ENCODE measurements at regions of chr11 and their contacts with region 1.

Region 1: DNA sequence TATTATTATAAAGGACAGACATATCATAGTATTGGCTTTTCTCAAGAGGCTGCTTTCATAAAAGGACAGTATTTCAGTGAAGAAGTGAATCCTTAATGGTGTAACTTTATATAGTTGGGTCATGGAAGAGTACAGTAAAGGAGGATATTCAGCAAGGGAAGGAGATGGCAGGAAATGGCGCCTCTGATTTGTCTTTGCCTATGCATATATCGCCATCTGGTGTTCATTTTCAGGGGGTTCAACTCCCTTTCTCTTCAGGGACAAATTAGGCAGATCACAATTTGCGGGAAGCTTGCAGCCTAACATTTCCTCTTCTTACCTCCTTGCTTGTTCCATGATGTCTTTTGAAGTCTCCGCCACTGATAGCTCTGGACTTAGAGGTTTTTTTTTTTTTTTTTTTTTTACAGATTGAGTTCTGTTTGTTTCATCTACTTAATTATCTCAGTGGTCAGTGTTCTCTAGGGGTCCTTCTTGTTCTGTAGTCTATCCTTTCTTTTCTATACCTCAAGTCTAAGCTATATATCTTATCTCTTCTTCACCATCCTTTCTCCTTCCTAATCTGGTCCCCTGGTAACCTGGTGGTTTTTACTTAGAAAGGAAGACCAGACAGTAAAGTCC is 21.8 kb upstream of the RRM1 start:
- DNase-seq: peak; percentile 81
- H3K4me3 Mint-ChIP-seq: no peak overlapping the region
- H3K27ac Mint-ChIP-seq: no peak overlapping the region
- H3K4me1 Mint-ChIP-seq: peaks cover 10% of the 10 kb centered on the region
- H3K27me3 Mint-ChIP-seq: no peaks in the 10 kb centered on the region
- CTCF ChIP-seq: peak; percentile 73

Region 2: DNA sequence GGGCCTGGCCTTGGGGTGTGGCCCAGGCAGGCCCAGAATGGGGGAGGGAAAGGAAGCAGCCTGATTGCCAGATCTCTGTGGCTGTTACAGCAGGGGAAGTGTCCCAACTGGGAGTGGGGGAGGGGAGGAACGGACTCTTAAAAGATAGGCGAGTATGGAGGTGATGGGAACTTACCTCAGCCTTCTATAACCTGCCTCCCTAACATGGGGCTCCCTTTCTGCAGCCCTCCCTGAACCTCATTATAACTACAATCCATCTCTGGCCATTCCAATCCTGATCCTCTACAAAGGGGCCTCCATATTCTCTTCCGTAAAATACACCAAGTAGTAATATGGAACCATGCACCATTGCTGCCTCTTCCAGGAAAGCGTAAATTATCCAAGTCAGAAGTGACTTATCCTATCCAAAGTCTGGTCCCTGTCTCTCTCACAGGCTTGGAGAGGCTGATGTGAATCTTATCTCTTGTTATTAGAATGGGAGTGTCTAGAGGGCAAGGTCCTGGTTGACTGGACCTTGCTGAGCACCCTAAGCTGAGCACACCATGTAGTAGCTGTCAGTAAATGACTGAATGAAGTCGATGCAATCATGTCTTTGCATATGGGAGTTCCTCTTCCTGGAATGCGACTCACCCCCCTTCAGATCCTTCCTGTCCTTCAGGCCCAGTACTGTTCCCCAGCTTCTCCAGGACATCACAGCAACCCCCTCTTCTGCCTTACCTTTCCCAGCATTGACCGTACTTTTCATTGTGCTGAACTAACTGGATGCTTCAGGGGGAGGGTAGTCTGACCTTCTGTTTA is 237.9 kb before region 1 on chr11:
- CTCF ChIA-PET with region 1: interaction called, 1,105 read pairs
- POLR2A ChIA-PET with region 1: interaction called, 13 read pairs
- intact Hi-C with region 1: no loop called
- DNase-seq: no peak
- H3K4me3 Mint-ChIP-seq: no peak overlapping the region
- H3K27ac Mint-ChIP-seq: peak overlapping the region; percentile 82
- H3K4me1 Mint-ChIP-seq: peaks cover 45% of the 10 kb centered on the region
- H3K27me3 Mint-ChIP-seq: no peaks in the 10 kb centered on the region
- CTCF ChIP-seq: no peak

Region 3: DNA sequence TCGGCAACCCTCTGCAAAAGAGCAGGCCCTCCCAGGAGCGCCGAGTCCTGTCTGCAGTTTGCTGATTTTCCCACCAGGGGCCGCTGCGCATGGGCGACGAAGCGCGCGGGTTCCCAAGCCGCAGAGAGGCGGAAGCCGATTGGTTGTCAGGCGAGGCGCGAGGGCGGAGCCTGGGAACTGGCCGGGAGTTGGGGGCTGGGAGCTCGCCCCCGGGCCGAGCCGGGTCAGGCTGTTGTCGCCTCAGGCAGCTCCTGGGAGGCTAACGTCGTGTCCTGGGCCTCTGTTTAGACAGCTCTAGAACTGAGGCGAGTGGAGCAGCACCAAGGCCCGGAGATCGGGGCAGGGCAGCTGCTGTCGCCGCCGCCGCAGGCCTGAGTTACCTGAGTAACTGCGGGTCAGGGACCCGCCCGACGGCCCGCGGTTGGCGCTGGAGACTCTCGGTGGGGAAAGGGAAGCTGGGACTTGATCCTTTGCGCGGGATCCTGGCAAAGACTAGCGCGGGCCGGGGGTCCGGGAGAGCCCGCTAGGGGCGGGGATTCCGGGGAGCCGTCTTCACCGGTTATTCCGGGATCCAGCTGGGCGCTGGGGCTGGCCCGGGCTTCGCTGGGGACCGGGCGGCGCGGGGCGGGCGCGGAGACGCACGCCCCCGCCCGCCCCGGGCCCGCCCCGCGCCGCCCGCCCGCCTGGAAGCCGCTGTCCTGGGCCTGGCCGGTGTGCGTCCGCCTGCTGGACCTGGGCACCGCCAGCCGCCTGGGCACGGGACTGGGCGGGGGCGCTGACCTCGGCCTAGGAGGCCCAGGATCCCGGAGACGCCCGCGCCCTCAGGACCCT is 217.6 kb before region 1 on chr11 and contains the start of gene STIM1:
- CTCF ChIA-PET with region 1: interaction called, 1,105 read pairs
- POLR2A ChIA-PET with region 1: interaction called, 57 read pairs
- intact Hi-C with region 1: loop called (anchors 1 kb)
- DNase-seq: peak; percentile 94
- H3K4me3 Mint-ChIP-seq: peak within 1 kb of the TSS; percentile 99
- H3K27ac Mint-ChIP-seq: peak within 1 kb of the TSS; percentile 87
- H3K4me1 Mint-ChIP-seq: peaks cover 30% of the 10 kb centered on the region
- H3K27me3 Mint-ChIP-seq: no peaks in the 10 kb centered on the region
- CTCF ChIP-seq: peak; percentile 95
- total RNA-seq, gene STIM1: 41.2 and 56.2 TPM in 2 replicates

Region 4: GRCh38 chr11:3905080-3905953 is 167.5 kb before region 1 on chr11:
- CTCF ChIA-PET with region 1: interaction called, 21 read pairs
- POLR2A ChIA-PET with region 1: no interaction called
- intact Hi-C with region 1: no loop called
- DNase-seq: peak; percentile 89
- H3K4me3 Mint-ChIP-seq: peak overlapping the region; percentile 28
- H3K27ac Mint-ChIP-seq: peak overlapping the region; percentile 67
- H3K4me1 Mint-ChIP-seq: peaks cover 30% of the 10 kb centered on the region
- H3K27me3 Mint-ChIP-seq: no peaks in the 10 kb centered on the region
- CTCF ChIP-seq: no peak

Region 5: GRCh38 chr11:4025248-4025966 is 47.4 kb before region 1 on chr11:
- CTCF ChIA-PET with region 1: interaction called, 20 read pairs
- POLR2A ChIA-PET with region 1: no interaction called
- intact Hi-C with region 1: no loop called
- DNase-seq: peak; percentile 41
- H3K4me3 Mint-ChIP-seq: no peak overlapping the region
- H3K27ac Mint-ChIP-seq: peak overlapping the region; percentile 29
- H3K4me1 Mint-ChIP-seq: peaks cover 21% of the 10 kb centered on the region
- H3K27me3 Mint-ChIP-seq: no peaks in the 10 kb centered on the region
- CTCF ChIP-seq: no peak

Region 6: DNA sequence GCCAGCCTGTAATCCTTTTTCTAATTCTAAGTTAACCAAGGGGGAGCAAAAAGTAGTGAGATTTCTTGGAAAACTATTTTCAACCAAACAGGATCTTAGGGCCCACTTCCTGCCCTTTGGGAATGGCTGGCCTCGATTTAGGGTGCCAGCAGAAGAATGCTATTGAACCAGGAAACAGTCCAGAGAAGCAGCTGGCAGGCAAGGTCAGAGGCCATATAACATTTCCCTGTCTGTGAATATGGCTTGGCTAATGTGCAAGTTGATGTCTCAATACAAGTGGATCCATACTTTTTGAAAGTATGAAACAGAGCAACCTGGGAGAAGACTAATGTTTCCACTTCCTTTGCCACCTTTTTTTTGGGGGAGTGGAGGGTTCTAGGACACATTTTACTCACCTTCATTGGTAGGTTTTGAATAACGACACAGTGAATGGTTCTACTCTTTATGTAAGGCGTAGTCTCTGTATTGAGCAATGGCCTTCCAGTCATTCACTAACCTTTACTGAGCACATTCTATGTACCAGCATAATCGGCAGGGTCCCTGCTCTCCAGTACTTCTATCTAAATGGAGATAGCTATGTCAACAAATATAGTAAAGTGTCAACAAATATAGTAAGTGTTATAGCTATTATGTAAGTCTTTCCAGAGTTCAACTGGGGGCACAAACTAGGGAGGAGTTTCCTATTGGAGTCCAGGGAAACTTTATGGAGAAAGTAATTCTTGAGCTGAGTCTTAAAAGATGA is 12.4 kb before region 1 on chr11:
- CTCF ChIA-PET with region 1: interaction called, 77 read pairs
- POLR2A ChIA-PET with region 1: interaction called, 3 read pairs
- intact Hi-C with region 1: no loop called
- DNase-seq: no peak
- H3K4me3 Mint-ChIP-seq: no peak overlapping the region
- H3K27ac Mint-ChIP-seq: no peak overlapping the region
- H3K4me1 Mint-ChIP-seq: no peaks in the 10 kb centered on the region
- H3K27me3 Mint-ChIP-seq: no peaks in the 10 kb centered on the region
- CTCF ChIP-seq: no peak

Region 7: GRCh38 chr11:4626207-4627099 is 553.7 kb after region 1 on chr11:
- CTCF ChIA-PET with region 1: no interaction called
- POLR2A ChIA-PET with region 1: no interaction called
- intact Hi-C with region 1: no loop called
- DNase-seq: peak; percentile 88
- H3K4me3 Mint-ChIP-seq: no peak overlapping the region
- H3K27ac Mint-ChIP-seq: no peak overlapping the region
- H3K4me1 Mint-ChIP-seq: no peaks in the 10 kb centered on the region
- H3K27me3 Mint-ChIP-seq: peaks cover 45% of the 10 kb centered on the region
- CTCF ChIP-seq: peak; percentile 73

Region 8: DNA sequence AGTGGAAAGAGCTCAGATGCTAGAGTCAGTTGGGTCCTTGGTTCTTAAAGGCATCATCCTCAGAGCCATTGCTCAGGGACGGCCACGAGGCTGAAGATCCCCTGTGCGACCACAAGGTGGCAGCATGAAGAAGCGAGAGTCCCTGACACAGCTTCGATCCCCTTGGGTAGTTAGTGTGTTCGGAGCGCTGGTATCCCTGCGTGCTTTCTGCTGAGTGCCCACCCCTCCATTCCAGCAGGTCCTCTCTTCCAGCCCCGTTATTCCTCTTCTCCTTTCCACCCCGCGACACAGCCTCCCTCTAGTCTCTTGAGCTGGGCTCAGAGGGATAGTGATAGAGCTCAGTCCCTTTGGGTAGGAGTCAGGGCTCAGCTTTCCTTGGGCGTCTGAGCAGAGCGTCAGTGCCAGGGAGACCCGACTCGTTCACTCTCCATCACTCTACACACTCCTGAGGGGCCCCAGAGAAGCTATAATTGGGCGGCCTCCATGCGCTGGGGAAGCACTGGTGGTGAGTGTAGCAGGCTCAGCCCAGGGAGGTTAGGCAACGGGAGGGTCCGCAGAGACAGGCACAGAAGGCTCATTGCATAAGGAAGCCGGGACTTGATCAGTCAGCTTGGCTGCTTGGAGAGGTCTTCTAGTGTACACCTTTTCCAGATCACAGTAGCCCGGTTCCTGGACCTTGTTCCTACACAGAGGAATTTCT is 564.3 kb after region 1 on chr11 and contains the start of gene OR51D1:
- CTCF ChIA-PET with region 1: no interaction called
- POLR2A ChIA-PET with region 1: no interaction called
- intact Hi-C with region 1: no loop called
- DNase-seq: peak; percentile 65
- H3K4me3 Mint-ChIP-seq: no peak within 1 kb of the TSS
- H3K27ac Mint-ChIP-seq: no peak within 1 kb of the TSS
- H3K4me1 Mint-ChIP-seq: no peaks in the 10 kb centered on the region
- H3K27me3 Mint-ChIP-seq: no peaks in the 10 kb centered on the region
- CTCF ChIP-seq: peak; percentile 81
- total RNA-seq, gene OR51D1: not detected in 2 replicates

Region 9: GRCh38 chr11:5390210-5390609 is 1317.4 kb after region 1 on chr11:
- CTCF ChIA-PET with region 1: no interaction called
- POLR2A ChIA-PET with region 1: no interaction called
- intact Hi-C with region 1: no loop called
- DNase-seq: no peak
- H3K4me3 Mint-ChIP-seq: no peak overlapping the region
- H3K27ac Mint-ChIP-seq: no peak overlapping the region
- H3K4me1 Mint-ChIP-seq: no peaks in the 10 kb centered on the region
- H3K27me3 Mint-ChIP-seq: no peaks in the 10 kb centered on the region
- CTCF ChIP-seq: no peak

Measured in MCF 10A (cell line).